ENCODE measurements at regions of chr1 and their contacts with region 1.

Region 1: DNA sequence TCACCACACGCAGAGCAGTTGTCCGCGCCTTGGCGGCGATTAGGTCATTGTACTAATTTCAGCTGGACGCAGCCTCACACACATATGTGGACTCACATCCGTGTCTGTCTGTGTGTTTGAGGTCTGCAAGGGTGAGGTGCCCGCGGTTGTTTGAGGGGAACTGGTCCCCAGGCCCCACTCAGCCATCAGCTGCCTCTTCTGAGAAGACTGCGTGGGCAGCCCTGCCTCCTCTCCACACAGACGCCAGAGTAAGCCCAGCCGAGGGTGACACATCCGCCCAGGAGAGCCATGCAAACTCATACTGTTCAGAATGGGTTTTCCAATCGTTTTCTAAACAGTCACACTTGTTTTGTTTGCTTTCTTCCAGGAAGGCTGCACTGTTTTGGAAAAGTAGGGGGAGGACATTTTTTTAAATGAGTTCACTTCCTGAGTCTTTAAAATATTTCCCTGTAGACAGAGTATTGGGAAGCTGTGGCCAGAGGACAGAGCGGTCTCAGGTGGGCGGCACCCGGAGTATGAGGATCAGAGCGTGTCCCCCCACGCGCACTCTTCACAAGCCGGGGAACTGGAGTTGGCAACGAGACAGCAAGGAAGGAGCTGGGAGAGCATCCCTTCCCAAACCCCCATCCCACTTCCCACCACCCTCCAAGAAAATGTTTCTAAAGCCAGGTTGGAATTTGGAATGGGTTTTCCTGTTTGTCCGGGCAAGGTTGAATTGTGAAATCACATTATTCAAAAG is 53.3 kb downstream of the TOMM20 start:
- DNase-seq: peak; percentile 59 to 79 (median 68)
- ATAC-seq: peak; percentile 12
- H3K4me3 ChIP-seq: no peak overlapping the region
- H3K4me1 ChIP-seq: peaks cover 56% of the 10 kb centered on the region
- CTCF ChIP-seq: no peak

Region 2: DNA sequence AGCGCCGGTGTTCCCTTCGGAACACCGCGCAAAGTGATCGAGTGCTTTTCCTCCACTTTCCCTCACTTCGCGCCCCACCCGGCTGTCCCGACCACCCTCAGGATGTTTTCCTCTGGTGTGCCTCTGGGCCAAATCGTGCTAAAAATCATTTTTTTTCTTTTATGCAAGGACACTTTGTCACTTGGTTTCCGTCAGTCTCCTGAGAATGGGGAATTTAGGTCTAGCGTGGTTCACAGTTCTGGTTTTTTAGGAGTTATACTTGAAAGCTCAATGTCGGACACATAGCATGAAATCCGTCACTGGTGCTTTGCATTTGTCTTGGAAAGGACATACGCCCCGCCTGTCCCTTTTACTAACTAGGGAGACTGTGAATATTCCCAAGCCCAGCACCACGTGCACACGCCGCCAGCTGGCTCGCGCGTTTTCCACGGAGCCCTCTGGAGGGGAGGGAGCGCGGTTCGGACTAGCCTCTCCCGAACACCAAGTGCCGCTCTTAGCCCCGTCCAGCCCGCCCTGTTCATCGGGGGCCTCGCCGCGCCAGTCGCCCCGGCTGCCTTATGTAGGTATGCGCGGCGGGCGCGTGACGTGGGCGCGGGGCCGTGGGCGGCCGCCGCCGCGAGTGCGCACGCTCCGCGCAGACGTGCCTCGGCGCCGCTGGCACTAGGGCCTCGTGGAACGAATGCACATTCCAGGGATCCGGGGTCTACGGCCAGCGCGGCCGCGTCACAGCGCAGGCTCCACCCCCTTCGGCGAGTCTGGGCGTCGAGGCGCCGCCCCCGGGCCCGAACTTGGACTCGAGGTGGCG is 464.8 kb before region 1 on chr1:
- intact Hi-C with region 1: loop called in 1 of 2 experiments (anchors 5 kb)
- DNase-seq: peak; percentile 96 to 98 (median 97)
- ATAC-seq: peak; percentile 69
- H3K4me3 ChIP-seq: peak overlapping the region; percentile 26
- H3K4me1 ChIP-seq: peaks cover 35% of the 10 kb centered on the region
- CTCF ChIP-seq: no peak

Region 3: DNA sequence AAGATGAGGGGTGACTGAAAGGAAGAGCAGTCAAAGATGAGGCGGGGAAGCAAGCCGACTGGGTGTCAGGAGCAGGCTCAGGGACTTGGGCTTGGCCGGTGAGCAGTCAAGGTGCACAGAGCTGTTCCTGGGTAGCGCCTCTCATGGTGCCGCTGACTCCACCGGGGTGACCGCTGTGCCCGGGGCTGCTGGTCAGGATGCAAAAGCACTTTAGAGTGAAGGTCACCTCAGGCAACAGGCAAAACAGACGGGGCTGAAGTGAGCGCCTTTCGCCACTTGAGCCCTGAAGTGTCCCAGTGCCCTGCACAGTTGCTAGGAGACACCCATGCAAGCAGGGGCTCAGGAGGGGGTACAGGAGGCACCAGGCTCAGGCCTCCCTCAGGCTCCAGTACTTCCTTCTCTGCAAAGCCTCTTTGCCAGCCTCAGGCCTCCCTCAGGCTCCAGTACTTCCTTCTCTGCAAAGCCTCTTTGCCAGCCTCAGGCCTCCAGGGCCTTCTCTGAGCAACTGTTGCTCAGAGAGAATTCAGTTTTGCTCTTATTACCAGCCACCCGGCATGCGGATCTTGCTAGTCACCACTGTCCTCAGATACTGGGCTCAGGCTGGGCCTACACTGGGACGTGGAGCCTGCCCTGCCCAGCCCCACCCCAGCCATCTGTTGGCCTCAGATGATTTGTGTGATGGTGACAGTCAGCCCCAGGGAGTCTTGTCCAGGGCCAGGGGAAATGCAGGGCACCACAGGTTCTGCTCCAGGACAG is 365.7 kb before region 1 on chr1:
- intact Hi-C with region 1: loop called in 1 of 2 experiments (anchors 10 kb)
- DNase-seq: peak; percentile 61 to 73 (median 73)
- ATAC-seq: peak; percentile 80
- H3K4me3 ChIP-seq: no peak overlapping the region
- H3K4me1 ChIP-seq: peaks cover 27% of the 10 kb centered on the region
- CTCF ChIP-seq: no peak

Region 4: DNA sequence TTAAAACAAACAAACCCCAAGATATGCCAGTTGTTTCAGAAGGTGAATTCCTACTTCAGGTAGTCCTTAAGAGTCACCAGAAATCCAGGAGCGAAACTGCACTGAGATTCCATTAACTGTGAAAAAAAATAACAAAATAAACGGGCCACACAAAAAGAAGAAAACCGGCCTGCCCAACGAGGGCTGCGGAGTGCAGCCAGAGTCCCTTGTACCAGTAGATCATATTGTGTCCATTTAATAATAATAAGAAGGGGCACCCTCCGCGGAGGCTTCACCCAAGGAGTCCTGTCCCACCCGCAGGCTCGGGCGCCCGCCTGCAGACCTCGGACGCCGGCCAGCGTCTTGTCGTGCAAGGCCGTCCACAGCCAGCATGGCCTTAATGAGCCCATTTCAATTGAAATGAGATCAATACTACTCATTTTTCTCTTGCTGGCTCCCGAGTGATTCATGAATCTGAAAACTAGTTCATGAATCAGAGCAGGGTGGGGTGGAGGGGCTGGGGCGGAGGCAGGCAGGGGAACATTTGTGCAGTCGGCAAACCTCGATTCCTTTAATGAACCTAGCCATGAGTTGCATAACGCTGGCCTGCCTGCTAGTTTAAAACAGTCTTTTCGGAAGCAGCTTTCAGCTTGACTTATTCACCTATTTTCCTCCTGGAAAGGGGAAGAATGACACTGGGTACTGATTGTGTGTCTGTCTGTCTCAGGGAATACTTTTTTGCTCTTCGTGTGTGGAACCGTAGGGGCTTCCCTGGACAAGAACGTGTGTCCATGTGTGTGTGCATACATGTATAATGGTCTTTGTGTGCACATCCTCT is 352.2 kb before region 1 on chr1:
- intact Hi-C with region 1: loop called (anchors 10 kb)
- DNase-seq: peak; percentile 55 to 75 (median 60)
- ATAC-seq: peak; percentile 27
- H3K4me3 ChIP-seq: no peak overlapping the region
- H3K4me1 ChIP-seq: peaks cover 69% of the 10 kb centered on the region
- CTCF ChIP-seq: no peak

Region 5: GRCh38 chr1:234963180-234963903 is 112.0 kb before region 1 on chr1:
- intact Hi-C with region 1: loop called in 1 of 2 experiments (anchors 5 kb)
- DNase-seq: peak; percentile 85 to 95 (median 91)
- ATAC-seq: peak; percentile 38
- H3K4me3 ChIP-seq: no peak overlapping the region
- H3K4me1 ChIP-seq: peaks cover 67% of the 10 kb centered on the region
- CTCF ChIP-seq: peak; percentile 6

Region 6: DNA sequence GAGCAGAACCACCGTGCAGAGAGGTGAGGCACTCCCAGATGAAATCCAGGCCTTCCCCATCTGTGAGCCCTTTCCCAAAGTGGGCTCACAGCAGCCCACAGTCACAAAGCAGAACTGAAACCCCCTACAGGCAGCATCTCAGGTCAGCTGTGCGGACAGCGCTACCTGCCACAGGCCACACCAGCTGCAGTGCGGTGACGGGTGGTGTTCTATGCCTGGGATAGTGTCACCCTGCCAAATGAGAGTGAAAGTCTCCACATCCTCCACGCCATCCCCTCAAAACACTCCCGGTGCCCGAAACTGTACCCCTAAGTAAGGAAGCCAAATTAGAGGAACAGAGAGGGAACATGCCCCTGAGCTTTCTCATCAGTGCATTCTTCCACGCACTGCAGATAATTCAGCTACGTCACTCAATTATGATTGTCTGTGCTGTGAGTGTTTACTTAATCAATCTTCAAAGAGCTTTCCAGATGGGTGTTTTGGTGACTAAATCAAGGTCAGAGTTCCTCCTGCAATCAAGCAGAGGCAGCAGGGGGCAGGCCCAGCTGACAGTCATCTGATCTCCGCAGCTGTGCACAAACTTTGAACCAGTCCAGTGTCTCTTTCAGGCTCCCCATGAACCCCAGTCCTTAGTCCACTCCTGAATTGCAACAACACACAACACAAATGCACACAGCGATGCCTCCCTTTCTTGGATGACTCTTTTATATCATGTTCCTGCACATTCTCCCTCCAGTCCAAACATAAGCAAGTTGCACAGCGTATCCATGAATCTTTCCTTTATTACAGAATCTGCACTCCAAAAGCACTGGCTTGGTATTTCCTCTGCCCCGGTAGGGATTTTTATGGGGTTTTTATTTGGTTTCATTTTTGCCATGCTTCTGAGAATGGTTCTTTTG is 96.7 kb before region 1 on chr1:
- intact Hi-C with region 1: loop called in 1 of 2 experiments (anchors 5 kb)
- DNase-seq: peak; percentile 77 to 89 (median 82)
- ATAC-seq: peak; percentile 75
- H3K4me3 ChIP-seq: no peak overlapping the region
- H3K4me1 ChIP-seq: peaks cover 73% of the 10 kb centered on the region
- CTCF ChIP-seq: no peak

Region 7: GRCh38 chr1:235270625-235271024 is 195.3 kb after region 1 on chr1:
- intact Hi-C with region 1: no loop called
- DNase-seq: no peak
- ATAC-seq: no peak
- H3K4me3 ChIP-seq: no peak overlapping the region
- H3K4me1 ChIP-seq: peaks cover 10% of the 10 kb centered on the region
- CTCF ChIP-seq: no peak

Region 8: GRCh38 chr1:235423191-235423652 is 347.9 kb after region 1 on chr1:
- intact Hi-C with region 1: no loop called
- DNase-seq: no peak
- ATAC-seq: peak; percentile 25
- H3K4me3 ChIP-seq: no peak overlapping the region
- H3K4me1 ChIP-seq: no peaks in the 10 kb centered on the region
- CTCF ChIP-seq: no peak